Mammary epithelial cell (primary cell): ENCODE measurements at regions of chr7 and their contacts with region 1.

Region 1: GRCh38 chr7:115356139-115356746 is 434.3 kb downstream of the MDFIC start:
- DNase-seq: no peak
- H3K4me3 ChIP-seq: no peak overlapping the region
- H3K27ac ChIP-seq: no peak overlapping the region
- H3K4me1 ChIP-seq: peaks cover 9% of the 10 kb centered on the region
- H3K27me3 ChIP-seq: no peaks in the 10 kb centered on the region
- CTCF ChIP-seq: peak; percentile 44 to 54

Region 2: DNA sequence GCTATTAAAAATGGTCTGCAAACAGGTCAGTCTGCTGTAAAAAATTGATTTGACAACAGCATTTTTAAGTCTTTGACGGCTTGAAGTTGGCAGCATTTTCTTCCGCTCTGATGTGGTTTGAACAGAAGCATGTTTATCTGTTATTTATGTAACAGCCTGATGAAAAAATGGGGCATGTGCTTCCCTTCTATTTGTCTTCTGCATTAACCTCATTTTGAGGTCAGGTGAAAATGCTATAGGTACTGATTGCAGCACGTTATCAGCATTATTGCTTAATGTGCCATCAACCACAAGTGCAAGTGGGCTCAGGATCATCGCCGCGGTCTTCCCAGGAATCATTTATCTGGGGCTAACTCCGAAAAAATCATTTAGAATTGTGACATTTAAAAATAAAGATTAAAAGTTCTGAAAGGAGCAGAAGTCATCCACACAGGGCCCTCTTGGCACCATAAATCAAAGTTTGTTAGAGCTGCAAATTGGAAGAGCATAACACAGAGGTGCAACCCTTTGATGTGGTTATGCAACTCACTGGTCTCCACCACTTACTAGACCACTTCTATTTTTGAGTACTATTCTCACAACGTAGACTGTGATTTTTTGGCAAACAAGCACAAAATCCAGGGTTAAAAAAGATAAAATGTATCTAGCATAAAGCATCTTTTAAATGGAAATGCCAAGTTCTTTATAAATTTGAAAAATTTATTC is 126.7 kb before region 1 on chr7:
- CTCF ChIA-PET with region 1: no interaction called
- dilution Hi-C with region 1: no loop called
- in situ Hi-C with region 1: no loop called
- intact Hi-C with region 1: loop called (anchors 10 kb)
- DNase-seq: no peak
- H3K4me3 ChIP-seq: no peak overlapping the region
- H3K27ac ChIP-seq: peak overlapping the region; percentile 99
- H3K4me1 ChIP-seq: peaks cover 24% of the 10 kb centered on the region
- H3K27me3 ChIP-seq: no peaks in the 10 kb centered on the region
- CTCF ChIP-seq: no peak

Region 3: GRCh38 chr7:115240242-115240641 is 116.0 kb before region 1 on chr7:
- CTCF ChIA-PET with region 1: no interaction called
- dilution Hi-C with region 1: no loop called
- in situ Hi-C with region 1: no loop called
- intact Hi-C with region 1: no loop called
- DNase-seq: no peak
- H3K4me3 ChIP-seq: no peak overlapping the region
- H3K27ac ChIP-seq: no peak overlapping the region
- H3K4me1 ChIP-seq: no peaks in the 10 kb centered on the region
- H3K27me3 ChIP-seq: no peaks in the 10 kb centered on the region
- CTCF ChIP-seq: no peak

Region 4: DNA sequence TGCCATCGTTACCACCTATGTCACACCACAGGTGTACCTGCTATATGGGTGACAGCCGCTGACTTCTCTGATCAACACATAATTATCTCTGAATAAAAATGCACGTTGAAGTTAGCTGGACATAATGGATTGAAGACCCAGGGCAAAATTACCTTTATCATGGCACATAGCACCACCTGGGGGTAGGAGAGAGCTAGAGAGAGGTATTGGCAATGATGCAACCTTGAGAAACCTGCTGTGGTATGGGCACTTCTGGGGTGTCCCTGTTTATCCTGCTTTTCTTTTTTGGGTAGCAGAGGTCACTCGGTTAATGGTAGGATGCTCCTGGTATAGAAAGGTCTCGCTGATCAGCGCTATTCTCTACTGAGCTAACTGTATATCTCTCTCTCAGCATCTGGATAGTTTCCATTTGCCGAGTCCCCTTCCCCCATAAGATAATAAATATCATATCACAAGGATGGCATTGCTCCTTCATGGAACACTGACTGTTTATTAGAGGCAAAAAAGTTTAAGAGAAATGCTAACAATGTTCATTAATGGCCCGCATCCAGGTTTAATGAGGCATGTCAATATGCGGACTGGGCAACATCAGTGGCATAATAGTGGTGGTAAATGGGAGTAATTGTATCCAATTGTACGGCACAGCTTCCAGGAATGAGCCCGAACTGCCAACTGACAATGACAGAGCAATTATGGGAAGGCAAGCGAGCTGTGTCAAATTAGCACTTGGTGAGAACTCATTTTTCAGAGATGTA is 351.2 kb after region 1 on chr7:
- CTCF ChIA-PET with region 1: no interaction called
- dilution Hi-C with region 1: no loop called
- in situ Hi-C with region 1: no loop called
- intact Hi-C with region 1: loop called (anchors 10 kb)
- DNase-seq: peak; percentile 5
- H3K4me3 ChIP-seq: no peak overlapping the region
- H3K27ac ChIP-seq: no peak overlapping the region
- H3K4me1 ChIP-seq: no peaks in the 10 kb centered on the region
- H3K27me3 ChIP-seq: peaks cover 2% of the 10 kb centered on the region
- CTCF ChIP-seq: peak; percentile 37 to 55

Region 5: GRCh38 chr7:115851291-115851690 is 495.0 kb after region 1 on chr7:
- CTCF ChIA-PET with region 1: no interaction called
- dilution Hi-C with region 1: no loop called
- in situ Hi-C with region 1: no loop called
- intact Hi-C with region 1: loop called (anchors 5 kb)
- DNase-seq: peak; percentile 14
- H3K4me3 ChIP-seq: no peak overlapping the region
- H3K27ac ChIP-seq: no peak overlapping the region
- H3K4me1 ChIP-seq: no peaks in the 10 kb centered on the region
- H3K27me3 ChIP-seq: peaks cover 3% of the 10 kb centered on the region
- CTCF ChIP-seq: peak; percentile 33 to 43

Region 6: GRCh38 chr7:115965796-115966475 is 609.7 kb after region 1 on chr7:
- CTCF ChIA-PET with region 1: no interaction called
- dilution Hi-C with region 1: no loop called
- in situ Hi-C with region 1: no loop called
- intact Hi-C with region 1: no loop called
- DNase-seq: no peak
- H3K4me3 ChIP-seq: no peak overlapping the region
- H3K27ac ChIP-seq: no peak overlapping the region
- H3K4me1 ChIP-seq: no peaks in the 10 kb centered on the region
- H3K27me3 ChIP-seq: no peaks in the 10 kb centered on the region
- CTCF ChIP-seq: no peak